ENCODE measurements at regions of chr1 and their contacts with region 1.

Region 1: DNA sequence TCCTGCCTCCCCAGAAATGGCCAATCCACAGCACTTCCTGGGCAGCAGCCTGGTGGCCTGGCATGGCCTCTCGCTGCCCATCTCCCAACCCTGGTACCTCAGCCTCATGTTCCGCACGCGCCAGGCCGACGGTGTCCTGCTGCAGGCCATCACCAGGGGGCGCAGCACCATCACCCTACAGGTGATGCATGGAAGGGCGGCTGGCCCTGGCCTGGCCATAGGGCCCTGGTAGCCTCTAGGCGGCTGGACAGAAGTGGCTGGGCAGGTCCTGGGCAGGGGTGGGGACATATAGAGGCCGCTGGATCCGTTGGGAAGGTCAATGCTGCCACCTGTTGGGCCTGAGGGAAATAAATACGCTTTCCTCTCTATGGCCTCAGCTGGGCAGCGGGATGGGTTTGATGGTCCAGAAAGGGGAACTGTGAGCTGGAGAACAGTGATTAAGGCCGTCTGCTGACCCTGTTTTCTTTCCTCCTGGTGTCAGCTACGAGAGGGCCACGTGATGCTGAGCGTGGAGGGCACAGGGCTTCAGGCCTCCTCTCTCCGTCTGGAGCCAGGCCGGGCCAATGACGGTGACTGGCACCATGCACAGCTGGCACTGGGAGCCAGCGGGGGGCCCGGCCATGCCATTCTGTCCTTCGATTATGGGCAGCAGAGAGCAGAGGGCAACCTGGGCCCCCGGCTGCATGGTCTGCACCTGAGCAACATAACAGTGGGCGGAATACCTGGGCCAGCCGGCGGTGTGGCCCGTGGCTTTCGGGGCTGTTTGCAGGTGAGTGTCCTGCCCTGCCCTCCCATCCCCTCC is 14.5 kb downstream of the CELSR2 start:
- DNase-seq: peak; percentile 38 to 90 (median 82)
- H3K4me3 ChIP-seq: peak overlapping the region in 40 of 59 donors; percentile 0 to 57 (median 28)
- H3K27ac ChIP-seq: peak overlapping the region; percentile 71 to 100 (median 93)
- H3K27me3 ChIP-seq: no peaks in the 10 kb centered on the region
- CTCF ChIP-seq: peak; percentile 58 to 98 (median 92)

Region 2: GRCh38 chr1:109083923-109084322 is 179.9 kb before region 1 on chr1:
- intact Hi-C with region 1: no loop called
- DNase-seq: peak in 8 of 10 donors; percentile 36 to 86 (median 54)
- H3K4me3 ChIP-seq: peak overlapping the region in 3 of 59 donors; percentile 8 to 17 (median 10)
- H3K27ac ChIP-seq: peak overlapping the region; percentile 24 to 96 (median 90)
- H3K27me3 ChIP-seq: no peaks in the 10 kb centered on the region
- CTCF ChIP-seq: peak in 17 of 56 donors; percentile 7 to 52 (median 22)

Region 3: GRCh38 chr1:109201123-109201703 is 62.6 kb before region 1 on chr1:
- intact Hi-C with region 1: loop called in 1 of 2 experiments (anchors 2 kb)
- DNase-seq: peak; percentile 16 to 85 (median 74)
- H3K4me3 ChIP-seq: no peak overlapping the region
- H3K27ac ChIP-seq: peak overlapping the region in 53 of 59 donors; percentile 1 to 85 (median 57)
- H3K27me3 ChIP-seq: no peaks in the 10 kb centered on the region
- CTCF ChIP-seq: peak; percentile 36 to 88 (median 72)

Measured in dorsolateral prefrontal cortex (tissue), 120 donors.